Caco-2 (cell line): ENCODE measurements at regions of chr12 and their contacts with region 1.

Region 1: DNA sequence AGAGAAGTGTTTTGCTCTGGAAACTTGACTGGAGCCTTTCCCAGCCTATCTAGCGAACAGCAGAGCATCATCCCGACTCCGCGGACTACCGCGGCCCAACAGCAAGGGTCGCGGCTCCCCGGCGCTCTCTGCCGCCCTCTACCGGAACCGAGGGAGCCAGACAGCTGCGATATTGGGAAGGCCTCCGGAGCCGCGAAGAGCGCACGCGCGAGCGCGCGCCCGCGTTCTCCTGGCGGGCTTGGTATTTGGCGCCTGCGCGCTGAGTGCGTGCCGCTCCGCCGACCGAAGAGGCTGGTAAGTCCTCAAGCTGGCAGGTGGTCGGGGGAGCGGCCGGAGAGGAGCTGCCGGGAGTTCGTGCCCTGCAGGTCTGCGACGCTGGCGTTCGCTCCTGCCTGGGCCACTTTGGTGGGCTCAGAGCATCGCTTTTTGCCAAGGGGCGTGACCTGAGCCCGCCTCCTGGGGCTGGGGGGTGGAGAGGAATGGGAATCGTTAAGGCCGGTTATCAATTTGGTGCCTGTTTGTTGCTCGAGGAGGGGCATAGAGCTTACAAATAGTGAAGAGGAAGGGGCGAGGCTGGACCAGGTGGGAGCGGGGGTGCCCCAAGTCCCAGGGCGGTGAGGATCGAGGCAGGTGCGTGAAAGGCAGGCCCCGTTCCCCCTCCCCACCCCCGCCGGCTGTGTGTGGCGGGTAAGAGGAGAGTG is at the start of gene TMEM106C:
- DNase-seq: peak; percentile 93 to 97
- H3K4me3 ChIP-seq: peak within 1 kb of the TSS; percentile 77
- H3K4me3 Mint-ChIP-seq: peak within 1 kb of the TSS; percentile 100
- H3K27ac Mint-ChIP-seq: peak within 1 kb of the TSS; percentile 97
- H3K4me1 ChIP-seq: no peaks in the 10 kb centered on the region
- H3K4me1 Mint-ChIP-seq: peaks cover 24% of the 10 kb centered on the region
- H3K27me3 ChIP-seq: no peaks in the 10 kb centered on the region
- H3K27me3 Mint-ChIP-seq: no peaks in the 10 kb centered on the region
- CTCF ChIP-seq: peak; percentile 98 to 99
- total RNA-seq, gene TMEM106C: 247 and 281 TPM in 2 replicates

Region 2: DNA sequence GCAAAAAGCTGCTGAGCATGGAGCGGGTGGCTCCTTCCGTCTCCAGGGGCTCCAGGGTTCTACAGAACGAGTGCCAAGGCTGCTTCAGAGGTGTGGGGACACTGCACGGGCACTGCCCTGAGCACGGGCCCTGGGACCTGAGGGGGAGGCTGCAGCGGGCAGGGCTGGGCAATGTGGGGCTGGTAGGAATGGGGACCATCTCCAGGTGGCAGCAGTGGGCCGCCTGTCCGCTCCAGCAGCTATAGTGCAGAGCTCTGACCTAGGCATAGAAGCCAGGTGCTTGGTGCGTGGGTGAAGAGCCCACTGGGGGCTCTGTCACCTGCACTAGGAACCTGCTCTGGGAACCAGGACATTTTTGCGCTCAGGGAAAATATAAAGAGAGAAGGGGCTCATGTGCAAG is 166.0 kb before region 1 on chr12:
- CTCF ChIA-PET with region 1: no interaction called
- POLR2A ChIA-PET with region 1: no interaction called
- intact Hi-C with region 1: loop called (anchors 5 kb)
- DNase-seq: peak in 1 of 2 experiments; percentile 66
- H3K4me3 ChIP-seq: no peak overlapping the region
- H3K4me3 Mint-ChIP-seq: no peak overlapping the region
- H3K27ac Mint-ChIP-seq: no peak overlapping the region
- H3K4me1 ChIP-seq: no peaks in the 10 kb centered on the region
- H3K4me1 Mint-ChIP-seq: no peaks in the 10 kb centered on the region
- H3K27me3 ChIP-seq: no peaks in the 10 kb centered on the region
- H3K27me3 Mint-ChIP-seq: no peaks in the 10 kb centered on the region
- CTCF ChIP-seq: peak; percentile 31 to 68

Region 3: DNA sequence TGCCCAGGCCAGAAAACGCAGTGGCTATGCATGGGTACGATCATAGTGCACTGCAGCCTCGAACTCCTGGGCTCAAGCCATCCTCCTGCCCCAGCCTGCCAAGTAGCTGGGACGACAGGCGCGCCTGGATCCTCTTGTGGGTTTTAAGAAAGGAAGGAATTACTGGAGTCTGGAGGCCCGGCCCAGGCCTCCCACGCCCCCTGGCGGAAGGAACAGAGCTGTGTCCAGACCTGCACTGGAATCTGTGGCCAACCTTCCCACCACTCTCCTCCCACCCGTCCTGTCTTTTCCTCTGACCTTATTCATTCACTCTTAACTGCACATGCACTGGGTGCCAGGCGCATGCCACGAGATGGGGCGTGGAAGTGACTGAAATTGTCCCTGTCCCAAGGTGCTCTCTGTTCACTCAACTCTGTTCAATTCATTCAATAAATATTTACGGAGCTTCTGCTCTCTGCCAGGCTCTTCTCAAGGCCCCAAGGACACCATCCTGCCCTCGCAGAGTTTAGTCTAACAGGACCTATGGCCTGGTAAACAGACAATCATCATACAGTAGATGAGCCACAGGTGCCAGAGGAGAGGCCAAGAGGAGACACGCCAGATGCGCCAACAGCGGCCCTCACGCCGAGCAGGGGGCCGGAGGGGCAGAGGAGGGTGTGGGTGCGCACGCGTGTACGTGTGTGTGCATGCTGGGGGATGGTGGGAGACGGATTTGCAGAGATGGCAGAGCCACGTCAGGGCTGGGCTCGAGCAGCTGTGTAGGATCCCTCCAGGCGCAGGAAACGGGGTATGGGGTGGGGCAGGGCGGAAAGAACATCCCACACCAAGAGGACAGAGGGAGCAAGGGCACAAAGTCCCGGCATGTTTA is 13.8 kb before region 1 on chr12:
- CTCF ChIA-PET with region 1: interaction called, 12 read pairs
- POLR2A ChIA-PET with region 1: no interaction called
- intact Hi-C with region 1: loop called (anchors 1 kb)
- DNase-seq: peak; percentile 86 to 94
- H3K4me3 ChIP-seq: no peak overlapping the region
- H3K4me3 Mint-ChIP-seq: no peak overlapping the region
- H3K27ac Mint-ChIP-seq: no peak overlapping the region
- H3K4me1 ChIP-seq: peaks cover 24% of the 10 kb centered on the region
- H3K4me1 Mint-ChIP-seq: peaks cover 40% of the 10 kb centered on the region
- H3K27me3 ChIP-seq: no peaks in the 10 kb centered on the region
- H3K27me3 Mint-ChIP-seq: no peaks in the 10 kb centered on the region
- CTCF ChIP-seq: peak; percentile 94 to 97

Region 4: DNA sequence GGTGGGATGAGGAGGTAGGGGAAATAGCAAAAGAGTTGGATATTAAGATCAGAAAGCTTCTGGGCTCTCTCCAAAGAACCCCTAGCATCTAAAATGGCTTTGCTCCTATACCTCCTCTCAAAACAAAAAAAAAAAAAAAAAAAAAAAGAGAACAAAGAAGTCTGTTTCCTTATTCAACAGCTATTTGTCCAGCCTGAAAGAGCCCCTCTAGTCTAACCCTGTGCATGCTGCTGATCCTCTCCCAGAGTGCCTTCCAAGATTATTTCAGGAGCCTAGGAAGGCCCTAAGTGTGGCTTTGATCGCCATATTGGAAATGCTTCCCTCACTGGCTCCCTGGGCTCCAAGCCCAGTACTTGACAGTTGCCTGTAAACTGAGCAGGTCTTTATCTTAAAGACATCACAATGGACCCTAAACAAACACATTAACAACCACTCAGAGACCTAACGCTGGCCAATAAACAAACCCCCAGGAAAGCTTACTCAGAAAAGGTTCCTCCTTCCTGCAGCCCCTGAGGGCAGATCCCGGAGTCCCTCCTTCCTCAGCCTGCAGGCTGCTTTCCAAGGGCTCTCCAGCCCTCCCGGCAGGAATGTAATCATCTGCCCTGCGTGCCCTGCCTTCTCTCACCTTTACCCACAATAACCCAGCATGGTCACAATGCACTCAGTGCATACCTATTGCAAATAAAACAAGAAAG is 58.1 kb after region 1 on chr12:
- CTCF ChIA-PET with region 1: interaction called, 12 read pairs
- POLR2A ChIA-PET with region 1: no interaction called
- intact Hi-C with region 1: loop called (anchors 2 kb)
- DNase-seq: peak; percentile 95 to 96
- H3K4me3 ChIP-seq: no peak overlapping the region; the same call in 1 of the 2 replicates
- H3K4me3 Mint-ChIP-seq: peak overlapping the region; percentile 64
- H3K27ac Mint-ChIP-seq: peak overlapping the region; percentile 88
- H3K4me1 ChIP-seq: peaks cover 78% of the 10 kb centered on the region
- H3K4me1 Mint-ChIP-seq: peaks cover 70% of the 10 kb centered on the region
- H3K27me3 ChIP-seq: no peaks in the 10 kb centered on the region
- H3K27me3 Mint-ChIP-seq: no peaks in the 10 kb centered on the region
- CTCF ChIP-seq: peak in 1 of 2 experiments; percentile 15

Region 5: DNA sequence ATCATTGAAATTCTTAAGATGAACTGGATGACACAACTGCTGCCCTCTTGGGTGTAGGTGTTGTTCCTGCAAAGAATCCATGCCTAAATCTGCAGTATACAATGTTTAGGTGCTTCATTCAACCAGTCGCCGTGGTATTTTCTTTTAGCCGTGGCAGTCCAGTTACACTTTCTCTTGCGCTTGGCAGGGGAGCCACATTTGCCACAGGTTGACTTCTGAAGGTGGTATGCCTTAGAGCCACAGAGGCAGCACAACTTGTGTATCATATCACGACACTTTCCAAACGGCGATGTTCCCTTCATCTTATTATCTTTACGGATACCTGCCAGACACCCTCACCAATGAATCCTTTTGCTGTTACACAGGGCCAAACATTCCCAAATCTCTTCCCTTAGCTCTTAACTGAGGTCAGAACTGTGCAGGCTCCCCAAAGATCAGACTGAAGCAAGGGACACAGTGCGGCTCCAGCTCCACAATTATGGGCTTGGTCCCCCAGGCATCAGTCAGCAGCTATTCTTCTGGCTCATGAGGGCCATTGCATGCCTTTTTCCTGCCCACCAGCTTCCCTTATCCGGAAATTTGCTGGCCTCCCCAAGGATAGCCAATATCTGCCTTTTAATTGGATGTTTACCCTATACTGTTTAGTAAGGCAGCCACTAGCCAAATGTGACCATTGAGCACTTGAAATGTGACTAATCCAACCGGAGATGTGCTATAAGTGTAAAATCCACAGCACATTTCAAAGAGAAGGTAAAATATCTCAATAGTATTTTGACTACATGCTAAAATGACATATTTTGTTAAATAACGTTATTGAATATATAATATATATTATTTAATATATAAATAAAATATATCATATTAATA is 91.7 kb after region 1 on chr12:
- CTCF ChIA-PET with region 1: no interaction called
- POLR2A ChIA-PET with region 1: no interaction called
- intact Hi-C with region 1: no loop called
- DNase-seq: no peak
- H3K4me3 ChIP-seq: no peak overlapping the region
- H3K4me3 Mint-ChIP-seq: no peak overlapping the region
- H3K27ac Mint-ChIP-seq: no peak overlapping the region
- H3K4me1 ChIP-seq: no peaks in the 10 kb centered on the region
- H3K4me1 Mint-ChIP-seq: no peaks in the 10 kb centered on the region
- H3K27me3 ChIP-seq: no peaks in the 10 kb centered on the region
- H3K27me3 Mint-ChIP-seq: no peaks in the 10 kb centered on the region
- CTCF ChIP-seq: no peak

Region 6: DNA sequence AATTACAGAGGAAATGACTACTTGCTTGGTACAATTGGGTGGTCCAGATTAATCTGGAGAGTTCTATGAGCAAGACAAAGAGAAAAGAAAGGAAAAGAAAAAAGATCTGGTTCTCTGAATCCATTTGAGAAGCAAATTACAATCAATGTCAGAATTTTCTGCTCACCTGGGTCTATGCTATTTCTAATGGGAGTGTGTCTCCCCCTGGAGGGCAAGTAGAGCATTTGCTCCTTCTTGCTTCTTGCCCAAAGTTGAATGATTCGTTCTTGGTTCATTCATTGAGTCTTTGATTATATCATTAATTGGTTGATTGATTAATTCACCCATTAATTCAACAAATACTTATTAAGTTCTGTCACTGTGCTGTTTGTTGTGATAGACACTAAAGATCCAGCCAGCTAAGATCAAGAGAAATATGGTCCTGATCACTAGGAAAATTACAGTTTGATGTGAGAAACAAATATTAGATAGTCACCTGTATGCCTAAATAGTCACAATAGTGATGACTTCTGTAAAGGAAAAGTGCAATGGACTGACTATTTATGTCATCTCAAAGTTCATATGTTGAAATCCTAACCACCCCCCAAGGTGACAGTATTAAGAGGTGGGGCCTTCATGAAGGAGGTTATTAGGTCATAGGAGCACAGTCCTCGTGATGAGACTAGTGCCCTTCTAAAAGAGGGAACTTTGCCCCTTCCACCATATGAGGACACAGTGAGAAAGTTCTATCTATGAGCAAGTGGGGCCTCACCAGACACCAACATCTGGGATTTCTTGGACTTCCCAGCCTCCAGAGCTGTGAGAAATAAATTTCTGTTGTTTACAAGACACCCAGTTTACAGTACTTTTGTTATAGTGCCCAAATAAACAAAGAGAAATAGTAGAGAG is 201.8 kb after region 1 on chr12:
- CTCF ChIA-PET with region 1: interaction called, 3 read pairs
- POLR2A ChIA-PET with region 1: no interaction called
- intact Hi-C with region 1: loop called (anchors 1 kb)
- DNase-seq: peak in 1 of 2 experiments; percentile 76
- H3K4me3 ChIP-seq: no peak overlapping the region
- H3K4me3 Mint-ChIP-seq: no peak overlapping the region
- H3K27ac Mint-ChIP-seq: no peak overlapping the region
- H3K4me1 ChIP-seq: no peaks in the 10 kb centered on the region
- H3K4me1 Mint-ChIP-seq: no peaks in the 10 kb centered on the region
- H3K27me3 ChIP-seq: no peaks in the 10 kb centered on the region
- H3K27me3 Mint-ChIP-seq: no peaks in the 10 kb centered on the region
- CTCF ChIP-seq: peak; percentile 92 to 96